ENCODE measurements at regions of chr19 and their contacts with region 1.

Region 1: DNA sequence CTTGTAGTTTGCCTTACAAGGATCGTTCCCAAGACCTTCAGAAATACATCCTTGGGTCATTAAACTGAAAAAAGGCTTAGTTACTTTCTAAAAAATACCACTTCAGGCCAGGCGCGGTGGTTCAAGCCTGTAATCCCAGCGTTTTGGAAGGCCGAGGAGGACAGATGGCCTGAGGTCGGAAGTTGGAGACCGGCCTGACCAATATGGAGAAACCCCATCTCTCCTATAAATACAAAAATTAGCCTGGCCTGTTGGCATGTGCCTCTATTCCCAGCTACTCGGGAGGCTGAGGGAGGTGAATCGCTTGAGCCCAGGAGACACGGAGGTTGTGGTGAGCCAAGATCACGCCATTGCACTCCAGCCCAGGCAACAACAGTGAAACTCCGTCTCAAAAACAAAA is 2.2 kb upstream of the ZNF28 start:
- DNase-seq: no peak
- ATAC-seq: no peak
- H3K4me3 ChIP-seq: no peak overlapping the region
- H3K27ac ChIP-seq: no peak overlapping the region
- H3K4me1 ChIP-seq: peaks cover 0 to 12% (median 6%) of the 10 kb centered on the region in 9 donors
- H3K27me3 ChIP-seq: no peaks in the 10 kb centered on the region
- CTCF ChIP-seq: no peak

Region 2: GRCh38 chr19:52507266-52507665 is 316.4 kb before region 1 on chr19:
- intact Hi-C with region 1: no loop called
- DNase-seq: no peak
- ATAC-seq: no peak
- H3K4me3 ChIP-seq: no peak overlapping the region
- H3K27ac ChIP-seq: no peak overlapping the region
- H3K4me1 ChIP-seq: no peaks in the 10 kb centered on the region
- H3K27me3 ChIP-seq: no peaks in the 10 kb centered on the region
- CTCF ChIP-seq: no peak

Region 3: GRCh38 chr19:52522555-52522954 is 301.1 kb before region 1 on chr19:
- intact Hi-C with region 1: no loop called
- DNase-seq: no peak
- ATAC-seq: no peak
- H3K4me3 ChIP-seq: no peak overlapping the region
- H3K27ac ChIP-seq: no peak overlapping the region
- H3K4me1 ChIP-seq: peaks cover 0 to 8% (median 4%) of the 10 kb centered on the region in 9 donors
- H3K27me3 ChIP-seq: no peaks in the 10 kb centered on the region
- CTCF ChIP-seq: no peak

Region 4: DNA sequence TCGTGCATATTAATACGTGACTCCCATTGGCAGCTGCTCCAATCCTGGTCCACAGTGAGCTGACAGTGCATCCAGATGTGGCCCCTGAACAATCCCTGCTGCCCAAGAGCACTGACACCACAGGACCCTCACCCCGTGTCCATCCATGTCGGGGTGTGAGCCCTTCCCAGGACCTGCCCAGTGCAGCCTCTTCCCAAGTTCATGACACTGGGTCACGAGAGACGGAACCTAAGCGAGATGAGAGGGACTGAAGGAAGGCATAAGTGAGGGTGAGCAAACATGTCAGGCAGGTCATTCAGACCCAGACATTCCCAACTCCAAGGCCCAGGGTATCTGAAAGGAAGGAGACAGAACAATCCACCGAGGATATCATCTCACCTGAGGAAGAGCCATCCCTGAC is 30.2 kb after region 1 on chr19:
- intact Hi-C with region 1: loop called in 3 of 10 experiments (anchors 1 to 5 kb)
- DNase-seq: no peak
- ATAC-seq: no peak
- H3K4me3 ChIP-seq: no peak overlapping the region
- H3K27ac ChIP-seq: no peak overlapping the region
- H3K4me1 ChIP-seq: peaks cover 0 to 10% (median 2%) of the 10 kb centered on the region in 9 donors
- H3K27me3 ChIP-seq: no peaks in the 10 kb centered on the region
- CTCF ChIP-seq: no peak

Region 5: DNA sequence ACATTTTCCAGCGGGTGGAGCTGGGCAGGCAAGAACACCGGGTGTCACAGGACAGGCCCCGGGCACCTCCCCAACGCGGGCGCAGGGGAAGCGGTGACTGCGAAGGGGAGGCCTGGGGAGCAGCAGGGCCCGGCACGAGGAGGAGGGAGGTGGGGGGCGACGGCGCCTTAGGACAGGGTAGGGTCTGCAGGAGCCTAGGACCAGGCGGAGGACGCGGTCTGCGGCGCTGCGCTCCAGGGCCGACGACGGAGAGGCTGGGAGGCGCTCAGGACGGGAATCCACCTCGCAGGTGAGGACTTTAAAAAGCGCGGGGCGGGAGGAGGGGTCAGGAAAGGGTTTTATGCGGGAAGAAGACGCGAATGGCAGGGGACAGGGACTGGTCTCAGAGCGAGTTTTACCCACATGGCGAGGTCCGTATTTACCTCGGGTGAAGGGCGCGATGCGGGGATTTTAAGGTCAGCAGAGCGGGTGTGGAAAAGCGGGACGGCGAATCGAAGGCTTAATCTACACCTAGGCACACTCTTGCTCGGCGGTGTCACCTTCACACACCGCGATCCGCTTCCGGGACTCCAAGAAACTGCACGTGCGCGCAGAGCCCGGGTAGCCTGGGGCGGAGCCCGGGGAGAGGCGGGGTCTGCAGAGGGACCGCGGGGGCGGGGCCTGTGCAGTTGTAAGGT is 234.4 kb after region 1 on chr19:
- intact Hi-C with region 1: no loop called
- DNase-seq: peak; percentile 11 to 35
- ATAC-seq: peak; percentile 57 to 88 (median 78)
- H3K4me3 ChIP-seq: peak overlapping the region in 9 of 10 donors; percentile 18 to 45 (median 34)
- H3K27ac ChIP-seq: no peak overlapping the region
- H3K4me1 ChIP-seq: peaks cover 0 to 13% (median 6%) of the 10 kb centered on the region in 9 donors
- H3K27me3 ChIP-seq: peaks cover 0 to 16% (median 0%) of the 10 kb centered on the region in 7 donors
- CTCF ChIP-seq: no peak

Measured in heart right ventricle (tissue), 16 donors.